Dendritic cell treated with granulocyte-macrophage colony-stimulating factor and Interleukin-4, amounts not matched to agents 40 ng/mL and 50 ng/mL, for 4 days (primary cell): ENCODE measurements at regions of chr4 and their contacts with region 1.

Region 1: DNA sequence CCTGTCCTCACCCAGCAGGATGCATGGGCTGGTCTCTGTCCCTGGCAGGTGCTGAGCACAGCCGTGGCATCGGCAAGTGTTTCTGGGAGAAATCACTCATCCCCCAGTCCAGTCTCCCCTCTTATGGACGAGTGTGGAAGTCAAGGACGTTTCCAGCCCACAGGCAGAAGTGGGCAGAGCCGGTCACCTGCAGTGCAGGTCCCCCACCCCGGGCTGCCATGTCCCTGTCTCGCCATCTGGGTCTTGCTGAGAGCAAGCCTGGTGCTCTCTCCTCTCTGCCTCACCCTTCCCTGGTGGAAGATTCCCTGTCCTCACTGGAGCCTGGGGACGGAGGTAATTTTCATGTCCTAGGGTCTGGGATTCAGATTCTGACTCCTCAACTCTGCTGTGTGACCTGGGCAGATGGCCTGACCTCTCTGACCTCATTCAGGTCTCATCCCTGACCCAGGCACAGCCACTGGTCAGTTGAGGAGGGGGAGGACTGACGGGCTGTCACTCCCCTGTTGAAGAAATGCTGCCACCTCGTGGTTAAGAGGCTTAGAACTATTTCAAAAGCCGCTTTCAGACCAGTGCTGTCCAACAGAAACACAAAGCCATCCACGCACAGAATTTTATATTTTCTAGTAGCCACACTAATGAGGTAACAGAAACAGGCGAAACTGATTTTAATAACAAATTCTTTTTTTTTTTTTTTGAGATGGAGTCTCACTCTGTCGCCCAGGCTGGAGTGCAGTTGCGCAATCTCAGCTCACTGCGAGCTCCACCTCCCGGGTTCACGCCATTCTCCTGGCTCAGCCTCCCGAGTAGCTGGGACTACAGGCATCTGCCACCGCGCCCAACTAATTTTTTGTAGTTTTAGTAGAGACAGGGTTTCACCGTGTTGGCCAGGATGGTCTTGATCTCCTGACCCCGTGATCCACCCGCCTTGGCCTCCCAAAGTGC is 1.8 kb downstream of the CPZ start:
- H3K4me3 Mint-ChIP-seq: no peak overlapping the region
- H3K27ac Mint-ChIP-seq: no peak overlapping the region
- H3K4me1 Mint-ChIP-seq: no peaks in the 10 kb centered on the region
- H3K27me3 Mint-ChIP-seq: peaks cover 41% of the 10 kb centered on the region

Region 2: DNA sequence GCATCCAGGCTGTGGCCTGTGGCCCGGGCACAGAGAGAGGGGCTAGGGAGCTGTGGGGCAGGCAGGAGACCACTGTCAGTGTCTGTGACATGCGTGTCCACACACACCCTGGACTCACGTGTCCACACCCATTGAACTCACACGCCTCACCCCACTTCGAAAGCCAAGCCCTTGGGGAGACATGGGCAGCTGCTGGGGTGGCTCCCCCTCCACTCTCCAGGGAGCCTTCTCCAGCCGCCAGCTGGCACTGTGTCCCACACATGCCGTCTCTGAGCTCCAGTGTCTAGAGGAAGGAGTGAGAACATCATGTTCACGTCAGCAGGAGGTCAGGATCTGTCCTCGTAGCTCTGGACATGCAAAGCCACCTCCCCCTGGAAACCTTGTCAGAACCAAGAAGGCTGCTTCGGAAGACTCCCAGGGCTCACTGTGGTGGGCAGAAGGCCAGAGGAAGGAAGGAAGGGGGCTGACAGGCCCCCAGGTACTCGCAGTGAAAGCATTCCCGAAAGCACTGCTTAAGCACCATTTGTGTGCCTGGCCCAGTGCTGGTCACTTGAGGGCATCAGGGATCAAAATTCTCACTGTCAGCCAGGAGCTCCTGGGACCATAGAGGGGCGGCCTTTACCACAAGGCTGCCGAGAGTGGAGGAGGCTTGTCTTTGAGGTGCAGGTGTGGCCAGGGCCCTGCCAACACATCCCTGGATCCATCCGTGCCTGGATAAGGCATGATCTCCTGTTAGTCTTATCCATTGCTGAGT is 263.4 kb before region 1 on chr4:
- intact Hi-C with region 1: no loop called
- H3K4me3 Mint-ChIP-seq: no peak overlapping the region
- H3K27ac Mint-ChIP-seq: no peak overlapping the region
- H3K4me1 Mint-ChIP-seq: peaks cover 2% of the 10 kb centered on the region
- H3K27me3 Mint-ChIP-seq: no peaks in the 10 kb centered on the region

Region 3: GRCh38 chr4:8468746-8469535 is 125.4 kb before region 1 on chr4:
- intact Hi-C with region 1: loop called (anchors 2 kb)
- H3K4me3 Mint-ChIP-seq: no peak overlapping the region
- H3K27ac Mint-ChIP-seq: no peak overlapping the region
- H3K4me1 Mint-ChIP-seq: no peaks in the 10 kb centered on the region
- H3K27me3 Mint-ChIP-seq: no peaks in the 10 kb centered on the region